Common myeloid progenitor, CD34-positive (primary cell): ENCODE measurements at regions of chr1 and their contacts with region 1.

Region 1: GRCh38 chr1:156641761-156642264 is at the start of gene BCAN:
- DNase-seq: peak in 2 of 3 donors; percentile 44 to 48
- H3K4me3 ChIP-seq: peak within 1 kb of the TSS in 5 of 7 experiments; percentile 13 to 54 (median 40)
- H3K27ac ChIP-seq: no peak within 1 kb of the TSS
- H3K4me1 ChIP-seq: peaks cover 8 to 35% (median 34%) of the 10 kb centered on the region in 4 experiments
- H3K27me3 ChIP-seq: peaks cover 4 to 79% (median 44%) of the 10 kb centered on the region in 5 experiments

Region 2: GRCh38 chr1:156549385-156549784 is 92.4 kb before region 1 on chr1:
- CTCF ChIA-PET with region 1: no interaction called
- POLR2A ChIA-PET with region 1: no interaction called
- DNase-seq: peak; percentile 19 to 45 (median 42)
- H3K4me3 ChIP-seq: no peak overlapping the region
- H3K27ac ChIP-seq: no peak overlapping the region
- H3K4me1 ChIP-seq: peaks cover 0 to 19% (median 5%) of the 10 kb centered on the region in 4 experiments
- H3K27me3 ChIP-seq: no peaks in the 10 kb centered on the region

Region 3: DNA sequence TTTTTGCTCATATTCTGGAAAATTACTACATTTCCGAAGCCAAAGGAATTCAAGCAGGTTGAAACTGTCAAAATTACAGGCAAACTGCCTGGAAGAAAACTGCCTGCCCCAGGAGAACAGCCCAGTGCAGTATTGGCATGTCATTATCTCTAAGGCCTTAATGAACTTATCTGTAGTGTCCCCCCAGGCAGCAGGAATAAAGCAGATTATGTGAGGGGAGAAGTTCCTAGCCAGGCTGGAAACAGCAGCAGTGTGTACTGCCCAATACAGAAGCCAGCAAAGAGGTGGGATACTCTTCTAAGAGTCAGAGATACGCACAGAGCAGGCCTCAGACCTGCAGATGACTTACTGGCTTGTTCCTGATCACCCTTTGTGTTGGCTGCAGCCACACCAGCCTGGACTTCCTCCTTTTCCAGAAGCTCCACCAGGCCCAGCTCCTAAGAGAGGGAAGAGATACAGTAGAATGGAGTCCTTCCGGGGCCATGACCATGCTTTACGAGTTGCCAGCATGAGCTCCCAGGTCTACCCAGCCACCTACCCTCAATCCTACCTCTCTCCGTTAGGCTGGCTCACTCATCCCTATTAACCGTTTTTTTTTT is 81.1 kb before region 1 on chr1:
- CTCF ChIA-PET with region 1: no interaction called
- POLR2A ChIA-PET with region 1: no interaction called
- DNase-seq: no peak
- H3K4me3 ChIP-seq: no peak overlapping the region
- H3K27ac ChIP-seq: no peak overlapping the region
- H3K4me1 ChIP-seq: no peaks in the 10 kb centered on the region
- H3K27me3 ChIP-seq: no peaks in the 10 kb centered on the region

Region 4: DNA sequence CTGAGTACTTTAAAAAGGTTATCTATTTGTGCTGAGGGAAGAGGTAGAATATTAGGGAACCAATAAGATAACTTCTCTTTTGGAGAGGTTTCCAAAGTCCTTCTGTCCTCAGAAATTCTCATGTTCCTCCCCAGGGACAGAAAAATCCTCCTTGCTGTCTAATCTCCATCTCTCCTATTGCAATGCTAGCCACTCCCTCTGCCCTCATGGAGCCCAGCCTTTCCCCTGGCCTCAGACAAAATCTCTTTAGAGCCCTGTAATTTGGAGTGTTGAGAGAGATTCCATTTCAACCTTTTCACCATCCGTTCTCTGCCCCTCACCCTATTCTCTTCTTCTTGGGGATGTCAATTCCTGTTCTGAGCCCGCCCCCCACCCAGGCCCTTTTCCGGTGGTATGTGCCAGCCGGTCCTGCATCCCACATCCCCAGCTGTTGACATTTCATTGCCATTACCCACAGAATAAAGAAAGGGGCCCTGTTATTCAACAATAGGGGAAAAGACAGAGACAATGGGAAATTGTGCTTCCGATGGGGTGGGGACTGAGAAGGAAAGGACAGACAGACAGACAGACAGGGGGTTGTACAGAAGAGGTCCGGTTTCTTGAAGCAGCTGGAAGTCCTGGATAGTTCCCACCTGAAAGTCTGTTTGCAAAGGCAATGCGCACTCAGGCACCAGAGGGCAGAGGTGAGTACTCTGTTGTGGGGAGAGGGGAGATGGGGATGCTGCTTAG is 22.8 kb before region 1 on chr1 and contains the start of gene HAPLN2:
- CTCF ChIA-PET with region 1: interaction called, 275 read pairs
- POLR2A ChIA-PET with region 1: no interaction called
- DNase-seq: peak; percentile 39 to 55 (median 46)
- H3K4me3 ChIP-seq: no peak within 1 kb of the TSS
- H3K27ac ChIP-seq: no peak within 1 kb of the TSS
- H3K4me1 ChIP-seq: peaks cover 0 to 13% (median 3%) of the 10 kb centered on the region in 4 experiments
- H3K27me3 ChIP-seq: peaks cover 4 to 50% (median 18%) of the 10 kb centered on the region in 5 experiments

Region 5: GRCh38 chr1:156659994-156660751 is 18.4 kb after region 1 on chr1:
- CTCF ChIA-PET with region 1: interaction called, 72 read pairs
- POLR2A ChIA-PET with region 1: no interaction called
- DNase-seq: peak; percentile 92 to 96 (median 95)
- H3K4me3 ChIP-seq: peak overlapping the region in 3 of 7 experiments; percentile 25 to 31 (median 26)
- H3K27ac ChIP-seq: peak overlapping the region in 1 of 2 experiments; percentile 81
- H3K4me1 ChIP-seq: peaks cover 3 to 87% (median 76%) of the 10 kb centered on the region in 4 experiments
- H3K27me3 ChIP-seq: peaks cover 0 to 26% (median 16%) of the 10 kb centered on the region in 5 experiments